ENCODE measurements at regions of chr4 and their contacts with region 1.

Region 1: GRCh38 chr4:51844153-51845054 is 1.5 kb downstream of the DCUN1D4 start:
- DNase-seq: peak; percentile 93 to 99 (median 97)

Region 2: GRCh38 chr4:52038103-52038912 is 193.9 kb after region 1 on chr4 and contains the start of gene SGCB:
- intact Hi-C with region 1: loop called (anchors 5 kb)
- DNase-seq: peak; percentile 52 to 94 (median 88)

Measured in head of caudate nucleus (tissue), 42 donors.